ENCODE measurements at regions of chr5 and their contacts with region 1.

Region 1: GRCh38 chr5:217860-218456 is at the starts of genes CCDC127 and SDHA:
- DNase-seq: peak; percentile 97
- H3K4me3 Mint-ChIP-seq: peak within 1 kb of the TSS; percentile 94
- H3K27ac Mint-ChIP-seq: peak within 1 kb of the TSS; percentile 86
- H3K4me1 Mint-ChIP-seq: peaks cover 44% of the 10 kb centered on the region
- H3K27me3 Mint-ChIP-seq: no peaks in the 10 kb centered on the region
- total RNA-seq, gene CCDC127: 6.5 and 7.3 TPM in 2 replicates
- total RNA-seq, gene SDHA: 154 and 157 TPM in 2 replicates

Region 2: DNA sequence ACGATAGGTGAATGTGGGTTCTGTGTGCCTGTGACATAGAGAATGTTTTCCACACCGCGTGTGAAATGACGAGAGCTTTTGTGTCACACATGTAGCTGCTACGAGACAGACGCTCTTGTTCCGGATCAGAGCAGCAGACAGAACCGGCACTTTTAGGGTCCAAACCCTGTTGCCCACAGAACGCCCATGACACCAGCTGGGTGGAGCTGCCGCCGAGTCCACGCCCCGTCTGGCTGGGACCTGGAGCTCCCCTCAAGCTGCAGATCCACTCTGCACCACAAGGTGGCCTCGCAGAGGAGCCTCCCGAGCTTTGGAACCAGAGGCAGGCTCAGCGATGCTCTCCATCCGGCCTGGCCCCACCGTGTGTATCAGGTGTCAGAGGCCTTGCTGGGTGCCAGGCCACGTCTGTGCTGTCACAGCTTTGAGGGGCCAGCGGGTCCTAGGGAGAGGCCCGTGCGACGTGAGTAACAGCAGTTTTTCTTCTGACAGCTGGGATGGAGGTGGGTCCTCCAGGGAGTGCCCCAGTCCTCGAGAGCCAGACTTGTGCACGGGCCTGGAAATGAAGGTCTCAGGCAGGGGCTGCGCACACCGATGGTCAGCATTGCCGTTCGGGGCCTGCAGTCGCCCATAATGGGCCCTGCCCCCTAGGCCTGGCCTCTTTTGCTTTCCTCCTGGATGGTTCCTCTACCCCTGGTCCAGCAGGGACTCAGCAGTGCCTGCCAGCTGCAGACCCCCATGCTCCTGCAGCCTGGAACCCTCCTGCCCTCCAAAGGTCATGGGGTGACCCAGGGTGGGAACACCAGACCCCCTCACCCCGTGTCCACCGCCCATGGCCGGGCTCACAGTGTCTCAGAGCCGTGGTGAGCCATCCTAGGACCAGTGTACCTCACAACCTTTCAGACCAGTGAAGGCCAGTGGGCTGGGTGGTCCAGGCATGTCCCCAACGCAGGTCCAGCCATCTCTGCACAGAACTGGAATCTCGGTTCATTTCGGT is 29.2 kb before region 1 on chr5:
- intact Hi-C with region 1: loop called (anchors 2 kb)
- DNase-seq: peak; percentile 83
- H3K4me3 Mint-ChIP-seq: no peak overlapping the region
- H3K27ac Mint-ChIP-seq: no peak overlapping the region
- H3K4me1 Mint-ChIP-seq: peaks cover 8% of the 10 kb centered on the region
- H3K27me3 Mint-ChIP-seq: peaks cover 8% of the 10 kb centered on the region

Region 3: GRCh38 chr5:252546-252945 is 34.6 kb after region 1 on chr5:
- intact Hi-C with region 1: no loop called
- DNase-seq: no peak
- H3K4me3 Mint-ChIP-seq: no peak overlapping the region
- H3K27ac Mint-ChIP-seq: no peak overlapping the region
- H3K4me1 Mint-ChIP-seq: no peaks in the 10 kb centered on the region
- H3K27me3 Mint-ChIP-seq: no peaks in the 10 kb centered on the region

Region 4: DNA sequence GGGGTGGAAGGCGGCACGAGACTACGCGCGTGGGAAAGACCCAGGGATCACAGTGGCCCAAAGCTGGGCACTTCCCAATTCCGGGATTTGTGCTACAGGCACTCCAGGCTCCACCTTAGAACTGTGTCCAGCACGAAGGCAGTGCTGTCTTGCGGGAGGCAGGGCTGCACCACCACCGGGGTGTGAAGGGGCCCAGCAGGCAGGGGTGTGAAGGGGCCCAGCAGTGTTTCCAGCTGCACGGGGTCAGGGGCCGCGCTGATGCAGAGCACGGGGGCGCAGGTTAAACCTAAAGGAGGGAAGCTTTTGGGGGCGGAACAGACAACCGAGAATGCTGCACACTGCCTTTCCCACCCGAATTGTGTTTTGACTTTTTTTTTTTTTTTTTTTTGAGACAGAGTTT is 52.4 kb after region 1 on chr5:
- intact Hi-C with region 1: loop called (anchors 1 kb)
- DNase-seq: no peak
- H3K4me3 Mint-ChIP-seq: peak overlapping the region; percentile 92
- H3K27ac Mint-ChIP-seq: peak overlapping the region; percentile 76
- H3K4me1 Mint-ChIP-seq: peaks cover 41% of the 10 kb centered on the region
- H3K27me3 Mint-ChIP-seq: no peaks in the 10 kb centered on the region

Measured in activated T-helper 2 cell treated with anti-CD3 and anti-CD28 coated beads, Interferon-gamma antibody, Interleukin-2, Interleukin-4, amounts not matched to agents 10 μg/mL and 5 μg/mL and 100 μg/mL, durations not matched to agents 14 hours and 24 hours and 36 hours (primary cell).